OCI-LY7 (cell line): ENCODE measurements at regions of chr2 and their contacts with region 1.

Region 1: DNA sequence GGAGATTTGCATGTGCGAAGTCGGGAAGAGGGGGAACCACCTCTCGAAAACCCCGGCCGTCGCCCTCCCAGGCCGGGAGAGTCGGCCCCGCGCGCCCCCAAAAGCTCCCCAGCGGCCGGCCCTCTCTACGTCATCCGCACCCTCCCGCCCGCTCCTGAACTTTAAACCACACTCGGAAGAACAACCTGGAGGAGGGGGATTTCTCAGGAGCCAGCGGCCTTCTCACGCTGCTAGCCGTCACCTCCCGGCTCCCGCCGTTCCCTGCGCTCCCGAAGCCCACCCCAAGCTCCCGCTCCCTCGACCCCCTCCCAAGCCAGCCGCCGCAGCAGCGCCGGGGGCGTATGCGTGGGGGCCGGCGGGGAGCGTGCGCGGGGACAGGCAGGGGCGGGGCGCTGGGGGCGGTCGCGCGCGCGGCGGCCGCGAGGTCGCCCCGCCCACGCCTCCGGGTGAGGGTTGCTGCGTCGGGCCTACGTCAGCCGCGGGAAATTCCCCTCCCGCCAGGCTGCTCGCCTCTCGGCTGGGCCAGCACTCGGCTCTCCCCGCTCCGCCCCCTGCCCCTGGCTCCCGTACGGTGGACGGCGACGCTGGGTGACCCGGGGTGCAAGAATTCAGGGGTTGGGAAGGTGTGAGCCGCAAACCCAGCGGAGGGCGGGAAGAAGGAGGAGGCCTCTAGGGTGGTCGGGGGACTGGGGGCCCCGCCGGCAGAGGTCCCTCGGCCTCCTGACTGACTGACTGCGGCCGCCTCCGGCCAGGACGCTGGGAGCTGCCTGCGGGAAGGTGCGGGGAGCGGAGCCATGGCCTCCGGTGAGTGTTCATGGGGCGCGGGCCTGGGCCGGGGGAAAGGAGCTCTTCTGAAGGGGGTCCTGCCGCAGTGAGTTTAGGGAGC is at the start of gene REL:
- DNase-seq: peak; percentile 93
- H3K4me3 ChIP-seq: peak within 1 kb of the TSS; percentile 88
- H3K27ac ChIP-seq: peak within 1 kb of the TSS; percentile 84
- H3K4me1 ChIP-seq: peaks cover 24% of the 10 kb centered on the region
- CTCF ChIP-seq: 0 out of 2 replicates have a peak, but pooled peaks have one; percentile 50
- total RNA-seq, gene REL: 49.9 and 50.2 TPM in 2 replicates

Region 2: GRCh38 chr2:60550178-60550983 is 330.9 kb before region 1 on chr2:
- CTCF ChIA-PET with region 1: no interaction called
- POLR2A ChIA-PET with region 1: no interaction called
- intact Hi-C with region 1: loop called (anchors 10 kb)
- DNase-seq: peak; percentile 91
- H3K4me3 ChIP-seq: peak overlapping the region; percentile 93
- H3K27ac ChIP-seq: peak overlapping the region; percentile 90
- H3K4me1 ChIP-seq: peaks cover 31% of the 10 kb centered on the region
- CTCF ChIP-seq: peak; percentile 89

Region 3: DNA sequence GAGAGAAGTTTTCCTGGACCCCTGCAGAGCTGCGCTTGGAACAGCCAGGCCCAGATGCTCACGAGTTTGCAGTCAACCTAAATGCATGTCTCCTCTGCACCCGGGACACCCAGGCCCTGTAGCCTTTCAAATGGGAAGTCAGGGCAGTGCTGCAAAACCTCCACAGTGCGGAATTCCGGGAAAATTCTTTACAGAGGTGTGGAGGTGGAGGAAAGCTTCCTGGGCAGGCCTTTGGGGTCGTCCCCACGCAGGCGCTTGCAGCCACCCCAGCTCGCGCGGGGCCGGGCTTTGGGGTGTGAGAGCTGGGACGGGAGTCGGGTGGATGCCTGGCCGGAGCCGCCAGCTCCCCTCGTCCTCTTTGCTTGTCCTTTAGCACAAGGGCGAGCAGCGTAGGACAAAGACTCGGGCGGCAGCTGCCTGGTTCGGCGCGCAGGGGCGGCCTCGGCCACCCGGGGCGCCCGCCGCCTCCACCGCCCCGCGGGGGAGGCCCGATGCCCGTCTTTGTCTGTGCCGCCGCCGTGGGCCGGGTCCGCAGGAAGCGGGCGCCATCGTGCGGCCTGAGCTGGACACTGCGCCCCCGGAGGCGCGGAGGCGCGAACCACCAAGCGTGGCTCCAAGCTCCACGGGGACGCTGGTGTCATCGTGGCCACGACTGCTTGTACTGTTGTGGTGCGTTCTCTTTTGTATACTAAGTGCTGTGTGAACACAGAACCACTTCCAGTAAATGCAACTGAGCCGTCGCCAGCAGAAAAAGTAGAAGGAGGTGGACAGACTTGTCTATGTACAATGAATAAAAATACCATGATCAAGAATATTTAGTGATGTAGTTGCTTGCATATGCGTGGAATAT is 299.6 kb before region 1 on chr2:
- CTCF ChIA-PET with region 1: no interaction called
- POLR2A ChIA-PET with region 1: no interaction called
- intact Hi-C with region 1: no loop called
- DNase-seq: peak; percentile 77
- H3K4me3 ChIP-seq: peak overlapping the region; percentile 51
- H3K27ac ChIP-seq: no peak overlapping the region
- H3K4me1 ChIP-seq: no peaks in the 10 kb centered on the region
- CTCF ChIP-seq: peak; percentile 94

Region 4: DNA sequence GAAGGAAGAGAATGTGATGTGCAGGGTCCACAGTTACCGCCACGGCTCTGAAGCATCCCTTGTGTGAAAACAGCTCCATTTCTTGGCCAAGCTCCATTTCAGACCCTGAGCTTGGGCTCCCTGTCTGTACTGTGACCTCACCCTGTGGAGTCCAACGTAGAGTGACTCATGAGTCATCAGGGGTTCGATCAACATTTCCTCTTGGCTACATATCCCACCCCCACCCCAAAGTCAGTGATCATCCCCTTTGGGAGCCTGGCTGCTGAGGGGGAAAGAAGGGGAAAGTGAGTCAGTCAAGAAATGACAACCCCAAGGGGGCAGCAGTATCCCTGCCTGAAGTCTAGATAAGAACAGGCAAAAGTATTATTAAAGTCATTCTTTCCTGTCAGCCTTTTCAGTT is 63.0 kb before region 1 on chr2:
- CTCF ChIA-PET with region 1: interaction called, 5 read pairs
- POLR2A ChIA-PET with region 1: interaction called, 14 read pairs
- intact Hi-C with region 1: no loop called
- DNase-seq: peak; percentile 59
- H3K4me3 ChIP-seq: no peak overlapping the region
- H3K27ac ChIP-seq: no peak overlapping the region
- H3K4me1 ChIP-seq: peaks cover 50% of the 10 kb centered on the region
- CTCF ChIP-seq: peak; percentile 78

Region 5: GRCh38 chr2:60867848-60868247 is 13.4 kb before region 1 on chr2:
- CTCF ChIA-PET with region 1: no interaction called
- POLR2A ChIA-PET with region 1: interaction called, 13 read pairs
- intact Hi-C with region 1: no loop called
- DNase-seq: peak; percentile 81
- H3K4me3 ChIP-seq: peak overlapping the region; percentile 22
- H3K27ac ChIP-seq: peak overlapping the region; percentile 79
- H3K4me1 ChIP-seq: peaks cover 41% of the 10 kb centered on the region
- CTCF ChIP-seq: no peak

Region 6: DNA sequence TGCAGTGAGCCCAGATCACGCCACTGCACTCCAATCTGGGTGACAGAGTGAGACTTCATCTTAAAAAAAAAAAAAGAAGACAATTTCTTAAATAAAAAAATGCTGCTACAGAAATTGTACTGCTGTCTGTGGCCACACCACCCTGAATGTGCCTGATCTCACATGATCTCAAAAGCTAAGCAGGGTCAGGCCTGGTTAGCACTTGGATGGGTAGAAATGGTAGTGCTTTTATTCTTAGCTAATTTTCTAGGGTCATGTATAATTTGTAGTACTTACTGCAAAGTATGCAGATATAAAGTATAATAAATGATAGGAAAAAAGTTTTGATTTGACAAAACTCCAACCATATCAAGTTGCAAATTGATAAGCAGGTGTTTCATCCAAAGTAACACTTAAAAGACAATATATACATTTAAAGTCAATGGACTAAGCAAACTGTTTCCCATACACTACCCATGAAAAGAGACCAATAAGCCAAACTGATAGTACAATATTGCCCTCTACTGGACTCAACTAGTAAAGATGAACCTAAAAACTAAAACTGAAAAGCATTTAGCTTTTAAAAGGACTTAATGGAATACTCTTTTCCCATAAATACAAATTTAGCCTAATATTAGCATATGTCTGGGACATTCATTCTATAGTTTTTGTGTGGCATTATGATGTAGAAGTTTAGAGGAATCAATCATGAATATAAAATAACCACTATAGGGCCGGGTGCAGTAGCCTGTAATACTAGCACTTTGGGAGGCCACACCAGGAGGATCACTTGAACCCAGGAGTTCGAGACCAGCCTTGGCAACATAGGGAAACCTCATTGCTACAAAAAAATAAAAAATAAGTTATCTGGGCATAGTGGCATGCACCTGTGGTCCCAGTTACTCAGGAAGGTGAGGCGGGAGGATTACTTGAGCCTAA is 117.6 kb after region 1 on chr2:
- CTCF ChIA-PET with region 1: no interaction called
- POLR2A ChIA-PET with region 1: interaction called, 3 read pairs
- intact Hi-C with region 1: loop called (anchors 2 kb)
- DNase-seq: peak; percentile 82
- H3K4me3 ChIP-seq: no peak overlapping the region
- H3K27ac ChIP-seq: peak overlapping the region; percentile 38
- H3K4me1 ChIP-seq: peaks cover 53% of the 10 kb centered on the region
- CTCF ChIP-seq: peak; percentile 97

Region 7: DNA sequence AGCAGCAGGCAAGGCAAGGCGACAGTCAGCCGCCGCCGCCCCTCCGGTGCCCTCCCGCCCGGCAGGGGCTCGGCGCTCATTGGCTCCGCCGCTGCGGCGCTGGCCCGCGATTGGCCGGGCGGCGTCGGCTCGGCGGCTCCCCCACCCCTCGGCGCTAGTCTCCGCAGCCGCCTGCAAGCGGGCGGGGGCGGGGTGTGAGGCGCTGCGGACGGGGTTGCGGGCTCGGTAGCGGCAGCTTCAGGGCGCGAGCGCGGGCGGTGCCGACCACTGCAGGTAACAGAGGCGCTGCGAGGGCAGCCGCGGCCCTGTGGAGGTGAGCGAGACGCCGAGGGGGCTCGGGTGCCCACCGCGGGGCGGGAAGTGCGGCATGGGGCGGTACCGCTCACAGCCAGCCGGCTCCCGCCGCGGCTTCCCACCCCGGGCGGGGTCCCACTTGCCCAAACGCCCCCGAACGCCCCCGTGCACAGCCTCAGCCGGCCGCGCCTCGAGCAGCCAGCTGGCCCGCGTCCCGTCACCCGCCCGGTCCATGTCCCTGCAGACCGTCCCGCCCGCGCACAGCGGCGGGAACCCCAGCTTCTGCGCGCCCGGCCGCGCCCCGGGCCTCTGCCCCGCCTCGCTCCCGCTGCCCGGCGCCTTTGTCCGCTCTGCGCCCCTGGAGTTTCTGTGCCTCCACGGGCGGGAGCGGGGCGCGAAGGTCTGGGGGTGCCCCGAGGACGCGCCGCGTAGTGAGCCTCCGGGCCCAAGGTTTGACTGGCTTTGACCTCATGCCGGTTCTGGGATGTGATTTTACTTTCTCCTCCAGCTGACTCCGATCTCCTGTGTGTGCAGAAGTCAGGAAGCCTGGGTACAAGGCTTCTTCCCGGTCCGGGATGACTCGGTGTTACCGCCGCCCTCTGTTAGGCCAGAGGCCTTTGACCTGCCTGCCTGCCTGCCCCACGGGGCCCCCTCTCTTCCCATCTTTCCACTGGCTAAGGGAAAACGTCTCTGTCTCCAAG is 184.7 kb after region 1 on chr2 and contains the start of gene SANBR:
- CTCF ChIA-PET with region 1: no interaction called
- POLR2A ChIA-PET with region 1: no interaction called
- intact Hi-C with region 1: no loop called
- DNase-seq: peak; percentile 91
- H3K4me3 ChIP-seq: peak within 1 kb of the TSS; percentile 80
- H3K27ac ChIP-seq: peak within 1 kb of the TSS; percentile 31
- H3K4me1 ChIP-seq: peaks cover 13% of the 10 kb centered on the region
- CTCF ChIP-seq: no peak
- total RNA-seq, gene SANBR: 7.9 and 8.3 TPM in 2 replicates

Region 8: GRCh38 chr2:61179701-61180639 is 298.7 kb after region 1 on chr2:
- CTCF ChIA-PET with region 1: no interaction called
- POLR2A ChIA-PET with region 1: no interaction called
- intact Hi-C with region 1: no loop called
- DNase-seq: no peak
- H3K4me3 ChIP-seq: peak overlapping the region; percentile 91
- H3K27ac ChIP-seq: no peak overlapping the region
- H3K4me1 ChIP-seq: peaks cover 32% of the 10 kb centered on the region
- CTCF ChIP-seq: no peak

Region 9: GRCh38 chr2:61426267-61426897 is 545.1 kb after region 1 on chr2:
- CTCF ChIA-PET with region 1: no interaction called
- POLR2A ChIA-PET with region 1: no interaction called
- intact Hi-C with region 1: loop called (anchors 10 kb)
- DNase-seq: peak; percentile 89
- H3K4me3 ChIP-seq: peak overlapping the region; percentile 57
- H3K27ac ChIP-seq: peak overlapping the region; percentile 98
- H3K4me1 ChIP-seq: peaks cover 85% of the 10 kb centered on the region
- CTCF ChIP-seq: peak; percentile 90

Region 10: DNA sequence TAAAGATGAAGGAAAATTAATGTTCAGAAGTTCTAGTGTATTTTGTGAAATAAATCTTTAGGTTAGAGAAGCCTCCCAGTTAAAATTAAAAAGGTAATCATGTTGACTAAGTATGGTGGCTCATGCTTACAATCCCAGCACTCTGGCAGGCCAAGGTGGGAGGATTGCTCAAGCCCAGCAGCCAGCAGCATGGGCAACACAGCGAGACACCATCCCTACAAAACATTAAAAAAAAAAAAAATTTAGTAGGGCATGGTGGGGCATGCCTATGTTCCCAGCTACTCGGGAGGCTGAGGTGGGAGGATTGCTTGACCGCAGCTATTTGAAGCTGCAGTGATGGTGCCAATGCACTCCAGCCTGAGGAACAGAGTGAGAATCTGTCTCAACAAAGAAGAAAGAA is 639.0 kb after region 1 on chr2:
- CTCF ChIA-PET with region 1: no interaction called
- POLR2A ChIA-PET with region 1: no interaction called
- intact Hi-C with region 1: no loop called
- DNase-seq: no peak
- H3K4me3 ChIP-seq: no peak overlapping the region
- H3K27ac ChIP-seq: no peak overlapping the region
- H3K4me1 ChIP-seq: peaks cover 11% of the 10 kb centered on the region
- CTCF ChIP-seq: no peak